ENCODE measurements at regions of chr18 and their contacts with region 1.

Region 1: GRCh38 chr18:10320791-10321190 is 133.6 kb upstream of the APCDD1 start:
- DNase-seq: no peak
- ATAC-seq: no peak
- H3K4me3 ChIP-seq: no peak overlapping the region
- H3K4me3 Mint-ChIP-seq: no peak overlapping the region
- H3K27ac ChIP-seq: no peak overlapping the region
- H3K27ac Mint-ChIP-seq: no peak overlapping the region
- H3K4me1 ChIP-seq: no peaks in the 10 kb centered on the region
- H3K4me1 Mint-ChIP-seq: peaks cover 0 to 7% (median 1%) of the 10 kb centered on the region in 3 donors
- H3K27me3 ChIP-seq: peaks cover 0 to 10% of the 10 kb centered on the region in 2 experiments
- H3K27me3 Mint-ChIP-seq: no peaks in the 10 kb centered on the region

Region 2: DNA sequence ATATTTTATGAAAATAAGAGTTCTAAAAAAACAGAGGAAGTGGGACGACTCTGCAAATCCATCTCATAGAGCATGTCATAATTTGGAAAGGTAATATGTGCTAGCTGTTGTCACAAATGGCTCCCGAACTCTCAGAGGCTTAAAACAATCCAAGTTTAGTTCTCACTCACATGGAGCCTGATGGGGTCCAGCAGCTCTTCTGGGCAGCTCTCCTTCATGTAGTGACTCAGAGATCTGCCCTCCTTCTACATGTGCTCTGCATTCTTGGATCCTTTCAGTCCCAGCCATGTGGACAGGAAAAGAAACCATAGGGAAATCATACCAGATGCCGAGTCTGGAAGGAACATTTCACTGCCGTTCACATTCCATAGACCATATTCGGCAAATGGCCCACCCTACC is 46.5 kb before region 1 on chr18:
- CTCF ChIA-PET with region 1: no interaction called
- POLR2A ChIA-PET with region 1: interaction called in 1 of 2 experiments, 14 read pairs
- DNase-seq: no peak
- ATAC-seq: no peak
- H3K4me3 ChIP-seq: no peak overlapping the region
- H3K4me3 Mint-ChIP-seq: no peak overlapping the region
- H3K27ac ChIP-seq: no peak overlapping the region
- H3K27ac Mint-ChIP-seq: no peak overlapping the region
- H3K4me1 ChIP-seq: peaks cover 0 to 2% of the 10 kb centered on the region in 2 experiments
- H3K4me1 Mint-ChIP-seq: peaks cover 0 to 2% (median 0%) of the 10 kb centered on the region in 3 donors
- H3K27me3 ChIP-seq: no peaks in the 10 kb centered on the region
- H3K27me3 Mint-ChIP-seq: peaks cover 0 to 5% of the 10 kb centered on the region in 2 donors

Region 3: GRCh38 chr18:10343778-10344177 is 23.0 kb after region 1 on chr18:
- CTCF ChIA-PET with region 1: no interaction called
- POLR2A ChIA-PET with region 1: no interaction called
- DNase-seq: no peak
- ATAC-seq: no peak
- H3K4me3 ChIP-seq: no peak overlapping the region
- H3K4me3 Mint-ChIP-seq: no peak overlapping the region
- H3K27ac ChIP-seq: no peak overlapping the region
- H3K27ac Mint-ChIP-seq: no peak overlapping the region
- H3K4me1 ChIP-seq: no peaks in the 10 kb centered on the region
- H3K4me1 Mint-ChIP-seq: no peaks in the 10 kb centered on the region
- H3K27me3 ChIP-seq: peaks cover 0 to 7% of the 10 kb centered on the region in 2 experiments
- H3K27me3 Mint-ChIP-seq: peaks cover 0 to 6% of the 10 kb centered on the region in 2 donors

Region 4: DNA sequence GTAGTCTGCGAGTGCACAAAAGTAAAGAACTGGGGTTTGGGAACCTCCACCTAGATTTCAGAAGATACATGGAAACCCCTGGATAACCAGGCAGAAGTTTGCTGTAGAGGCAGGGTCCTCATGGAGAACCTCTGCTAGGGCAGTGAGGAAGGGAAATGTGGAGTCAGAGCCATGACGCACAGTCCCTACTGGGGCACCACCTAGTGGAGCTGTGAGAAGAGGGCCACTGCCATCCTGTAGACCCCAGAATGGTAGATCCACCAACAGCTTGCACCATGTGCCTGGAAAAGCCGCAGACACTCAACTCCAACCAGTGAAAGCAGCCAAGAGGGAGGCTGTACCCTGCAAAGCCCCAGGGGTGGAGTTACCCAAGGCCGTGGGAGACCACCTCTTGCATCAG is 622.2 kb after region 1 on chr18:
- CTCF ChIA-PET with region 1: no interaction called
- POLR2A ChIA-PET with region 1: no interaction called
- DNase-seq: no peak
- ATAC-seq: no peak
- H3K4me3 ChIP-seq: no peak overlapping the region
- H3K4me3 Mint-ChIP-seq: no peak overlapping the region
- H3K27ac ChIP-seq: no peak overlapping the region
- H3K27ac Mint-ChIP-seq: no peak overlapping the region
- H3K4me1 ChIP-seq: no peaks in the 10 kb centered on the region
- H3K4me1 Mint-ChIP-seq: no peaks in the 10 kb centered on the region
- H3K27me3 ChIP-seq: peaks cover 0 to 3% of the 10 kb centered on the region in 2 experiments
- H3K27me3 Mint-ChIP-seq: no peaks in the 10 kb centered on the region

Measured in T-cell (primary cell).